Activated T-helper 2 cell treated with anti-CD3 and anti-CD28 coated beads, Interferon-gamma antibody, Interleukin-2, Interleukin-4, amounts not matched to agents 10 μg/mL and 5 μg/mL and 100 μg/mL, durations not matched to agents 14 hours and 24 hours and 36 hours (primary cell): ENCODE measurements at regions of chr12 and their contacts with region 1.

Region 1: DNA sequence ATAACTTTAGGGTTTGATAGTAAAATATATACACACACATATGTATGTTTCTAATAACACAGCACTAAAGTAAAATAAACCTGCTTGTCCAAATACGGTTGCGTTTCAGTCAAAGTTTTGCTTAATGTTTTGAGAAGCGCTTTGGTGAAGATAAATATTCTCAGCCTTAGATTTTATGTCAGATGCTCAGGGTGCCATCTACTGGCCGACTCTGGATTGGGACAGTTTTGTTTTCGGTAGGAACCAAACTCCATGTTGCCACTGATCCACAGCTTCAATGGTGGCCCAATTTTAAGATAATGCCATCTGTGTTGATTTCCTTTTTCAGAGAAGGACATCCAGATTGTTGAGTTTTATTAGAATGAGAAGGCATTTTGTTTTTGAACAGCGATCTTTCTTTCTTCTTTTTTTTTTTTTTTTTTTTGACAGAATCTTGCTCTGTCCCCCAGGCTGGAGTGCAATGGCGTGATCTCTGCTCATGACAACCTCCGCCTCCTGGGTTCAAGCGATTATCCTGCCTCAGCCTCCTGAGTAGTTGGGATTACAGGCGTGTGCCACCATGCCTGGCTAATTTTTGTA is 43.1 kb downstream of the LLPH start:
- DNase-seq: peak; percentile 17
- H3K4me3 Mint-ChIP-seq: no peak overlapping the region
- H3K27ac Mint-ChIP-seq: no peak overlapping the region
- H3K4me1 Mint-ChIP-seq: no peaks in the 10 kb centered on the region
- H3K27me3 Mint-ChIP-seq: peaks cover 23% of the 10 kb centered on the region

Region 2: DNA sequence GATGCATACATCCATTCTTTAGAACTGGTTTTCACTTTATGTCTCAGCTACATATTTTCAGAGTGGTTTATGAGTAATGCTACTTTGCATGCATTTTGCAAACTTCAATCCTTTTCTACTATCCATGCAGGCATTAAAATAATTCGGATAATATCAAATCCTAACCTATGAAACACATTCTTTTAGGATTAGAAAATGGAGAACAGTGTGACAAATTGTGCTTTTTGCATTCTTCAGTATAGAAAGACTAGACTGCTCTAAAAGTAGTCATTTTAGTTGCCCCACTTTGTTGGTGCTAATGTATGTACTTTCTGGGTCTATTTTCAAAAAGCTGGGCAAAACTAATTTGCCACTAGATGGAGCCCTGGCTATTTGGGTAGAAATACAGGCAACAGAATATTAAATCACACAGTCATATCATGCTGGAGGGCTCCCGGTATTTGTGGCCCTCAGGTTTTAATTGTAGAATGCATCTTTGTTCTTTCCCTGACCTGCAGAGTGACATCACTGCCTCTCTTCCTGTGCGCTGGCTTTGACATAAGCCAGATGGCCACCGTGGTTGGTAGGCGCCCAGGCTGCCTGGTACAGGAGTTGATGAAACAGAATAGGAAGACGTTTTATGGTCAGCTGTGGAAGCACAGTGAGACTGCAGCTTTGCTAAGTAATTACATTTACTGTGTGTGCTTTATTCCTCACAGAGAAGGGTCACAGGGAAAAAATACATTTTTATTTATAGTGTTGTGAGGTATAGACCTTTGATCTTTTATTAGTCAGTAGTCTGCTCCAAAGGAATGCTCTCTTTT is 780.9 kb before region 1 on chr12:
- intact Hi-C with region 1: loop called (anchors 10 kb)
- DNase-seq: no peak
- H3K4me3 Mint-ChIP-seq: no peak overlapping the region
- H3K27ac Mint-ChIP-seq: no peak overlapping the region
- H3K4me1 Mint-ChIP-seq: no peaks in the 10 kb centered on the region
- H3K27me3 Mint-ChIP-seq: peaks cover 22% of the 10 kb centered on the region

Region 3: GRCh38 chr12:66072135-66072534 is 15.3 kb before region 1 on chr12:
- intact Hi-C with region 1: no loop called
- DNase-seq: no peak
- H3K4me3 Mint-ChIP-seq: no peak overlapping the region
- H3K27ac Mint-ChIP-seq: no peak overlapping the region
- H3K4me1 Mint-ChIP-seq: no peaks in the 10 kb centered on the region
- H3K27me3 Mint-ChIP-seq: peaks cover 2% of the 10 kb centered on the region

Region 4: GRCh38 chr12:66288121-66288520 is 200.7 kb after region 1 on chr12:
- intact Hi-C with region 1: no loop called
- DNase-seq: peak; percentile 67
- H3K4me3 Mint-ChIP-seq: no peak overlapping the region
- H3K27ac Mint-ChIP-seq: peak overlapping the region; percentile 48
- H3K4me1 Mint-ChIP-seq: peaks cover 61% of the 10 kb centered on the region
- H3K27me3 Mint-ChIP-seq: no peaks in the 10 kb centered on the region